ENCODE measurements at regions of chr11 and their contacts with region 1.

Region 1: GRCh38 chr11:14249121-14249963 is 109.6 kb downstream of the RRAS2 start:
- DNase-seq: peak in 5 of 6 donors; percentile 14 to 82 (median 41)
- ATAC-seq: peak in 3 of 4 donors; percentile 74 to 81 (median 78)
- H3K4me3 ChIP-seq: no peak overlapping the region
- H3K27ac ChIP-seq: no peak overlapping the region
- H3K4me1 ChIP-seq: no peaks in the 10 kb centered on the region
- H3K27me3 ChIP-seq: no peaks in the 10 kb centered on the region
- CTCF ChIP-seq: peak; percentile 64 to 80 (median 78)

Region 2: GRCh38 chr11:13761712-13762111 is 487.6 kb before region 1 on chr11:
- intact Hi-C with region 1: loop called in 1 of 3 experiments (anchors 10 kb)
- DNase-seq: no peak
- ATAC-seq: no peak
- H3K4me3 ChIP-seq: no peak overlapping the region
- H3K27ac ChIP-seq: no peak overlapping the region
- H3K4me1 ChIP-seq: no peaks in the 10 kb centered on the region
- H3K27me3 ChIP-seq: no peaks in the 10 kb centered on the region
- CTCF ChIP-seq: no peak

Region 3: GRCh38 chr11:13772223-13773046 is 476.9 kb before region 1 on chr11:
- intact Hi-C with region 1: loop called (anchors 5 to 10 kb)
- DNase-seq: peak in 3 of 6 donors; percentile 12 to 39 (median 27)
- ATAC-seq: peak; percentile 80 to 96 (median 91)
- H3K4me3 ChIP-seq: no peak overlapping the region
- H3K27ac ChIP-seq: no peak overlapping the region
- H3K4me1 ChIP-seq: no peaks in the 10 kb centered on the region
- H3K27me3 ChIP-seq: no peaks in the 10 kb centered on the region
- CTCF ChIP-seq: peak in 1 of 4 donors; percentile 19

Region 4: DNA sequence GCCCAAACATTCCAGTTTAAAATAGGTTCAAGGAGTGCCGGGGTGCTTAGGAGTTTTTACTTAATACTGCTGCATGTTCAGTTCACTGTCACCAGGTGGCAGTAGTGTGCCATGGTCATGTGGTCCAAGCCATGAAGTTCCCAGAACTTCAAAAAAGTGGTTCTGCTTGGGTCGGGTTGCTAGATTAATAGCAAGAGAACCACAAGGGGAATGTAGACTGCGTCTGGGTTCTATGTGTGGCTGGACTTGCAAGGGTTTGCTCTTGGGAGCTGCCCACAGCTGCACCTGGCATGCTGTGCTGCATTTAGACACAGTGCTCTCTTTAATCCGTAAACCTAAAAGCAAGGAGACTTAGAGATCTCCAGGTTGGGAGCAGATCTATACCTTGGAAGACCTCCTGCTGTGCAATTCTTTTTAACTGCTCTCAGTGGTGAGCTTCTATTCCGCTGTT is 293.3 kb before region 1 on chr11:
- intact Hi-C with region 1: loop called in 2 of 3 experiments (anchors 5 kb)
- DNase-seq: peak in 4 of 6 donors; percentile 26 to 56 (median 39)
- ATAC-seq: peak in 3 of 4 donors; percentile 80 to 91 (median 82)
- H3K4me3 ChIP-seq: no peak overlapping the region
- H3K27ac ChIP-seq: no peak overlapping the region
- H3K4me1 ChIP-seq: no peaks in the 10 kb centered on the region
- H3K27me3 ChIP-seq: no peaks in the 10 kb centered on the region
- CTCF ChIP-seq: peak; percentile 49 to 84 (median 79)

Measured in pancreas (tissue), 10 donors.